Gastrocnemius medialis (tissue), 4 donors: ENCODE measurements at regions of chr12 and their contacts with region 1.

Region 1: GRCh38 chr12:8081251-8081920 is 688 bp upstream of the NECAP1 start:
- DNase-seq: peak; percentile 5 to 50
- ATAC-seq: peak; percentile 64 to 71
- H3K4me3 ChIP-seq: peak overlapping the region; percentile 73 to 99 (median 96)
- H3K27ac ChIP-seq: peak overlapping the region; percentile 92 to 99 (median 98)
- H3K4me1 ChIP-seq: peaks cover 24 to 29% of the 10 kb centered on the region in 2 donors
- H3K27me3 ChIP-seq: no peaks in the 10 kb centered on the region
- CTCF ChIP-seq: no peak
- POLR2A ChIP-seq: no peak

Region 2: GRCh38 chr12:8026291-8026900 is 55.0 kb before region 1 on chr12:
- in situ Hi-C with region 1: loop called in 1 of 4 experiments (anchors 5 kb)
- intact Hi-C with region 1: no loop called
- DNase-seq: peak; percentile 99
- ATAC-seq: peak; percentile 98 to 99
- H3K4me3 ChIP-seq: peak overlapping the region; percentile 77 to 98 (median 90)
- H3K27ac ChIP-seq: peak overlapping the region; percentile 98 to 100 (median 100)
- H3K4me1 ChIP-seq: no peaks in the 10 kb centered on the region
- H3K27me3 ChIP-seq: no peaks in the 10 kb centered on the region
- CTCF ChIP-seq: no peak
- POLR2A ChIP-seq: peak in 1 of 2 donors; percentile 68

Region 3: DNA sequence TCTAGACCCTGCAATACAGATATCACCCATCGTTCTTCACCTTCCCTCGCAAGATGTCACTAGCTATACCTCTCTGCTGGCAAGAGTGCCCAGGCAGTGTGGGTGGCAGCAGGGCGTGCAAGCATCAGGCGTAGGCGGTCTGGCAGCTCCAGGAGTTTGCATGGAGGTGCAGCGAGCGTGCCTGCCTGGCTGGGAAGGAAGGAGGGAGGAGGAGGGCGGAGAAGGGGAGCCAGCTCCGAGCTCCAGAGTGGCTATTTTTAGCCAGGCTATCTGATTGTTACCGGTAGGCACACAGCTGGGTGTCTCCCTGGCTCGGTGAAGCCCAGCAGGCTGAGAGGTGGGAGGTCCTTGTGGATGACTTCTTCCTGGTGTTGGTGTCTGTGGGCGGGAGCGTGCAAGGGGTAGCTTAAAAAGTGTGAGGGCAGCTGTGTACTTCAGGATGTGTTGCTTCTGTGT is 42.7 kb before region 1 on chr12:
- in situ Hi-C with region 1: loop called in 1 of 4 experiments (anchors 5 kb)
- intact Hi-C with region 1: loop called (anchors 1 kb)
- DNase-seq: peak; percentile 53 to 72
- ATAC-seq: peak; percentile 77 to 88
- H3K4me3 ChIP-seq: peak overlapping the region; percentile 22 to 42 (median 28)
- H3K27ac ChIP-seq: peak overlapping the region; percentile 89 to 98 (median 95)
- H3K4me1 ChIP-seq: peaks cover 57 to 60% of the 10 kb centered on the region in 2 donors
- H3K27me3 ChIP-seq: no peaks in the 10 kb centered on the region
- CTCF ChIP-seq: no peak
- POLR2A ChIP-seq: peak in 1 of 2 donors; percentile 10

Region 4: GRCh38 chr12:8045952-8046944 is 35.1 kb before region 1 on chr12:
- in situ Hi-C with region 1: no loop called
- intact Hi-C with region 1: loop called (anchors 2 kb)
- DNase-seq: peak; percentile 18 to 53
- ATAC-seq: peak in 1 of 2 donors; percentile 81
- H3K4me3 ChIP-seq: no peak overlapping the region
- H3K27ac ChIP-seq: no peak overlapping the region
- H3K4me1 ChIP-seq: peaks cover 0 to 7% of the 10 kb centered on the region in 2 donors
- H3K27me3 ChIP-seq: no peaks in the 10 kb centered on the region
- CTCF ChIP-seq: peak; percentile 58 to 81 (median 62)
- POLR2A ChIP-seq: no peak